GM13976 (cell line): ENCODE measurements at regions of chr2 and their contacts with region 1.

Region 1: DNA sequence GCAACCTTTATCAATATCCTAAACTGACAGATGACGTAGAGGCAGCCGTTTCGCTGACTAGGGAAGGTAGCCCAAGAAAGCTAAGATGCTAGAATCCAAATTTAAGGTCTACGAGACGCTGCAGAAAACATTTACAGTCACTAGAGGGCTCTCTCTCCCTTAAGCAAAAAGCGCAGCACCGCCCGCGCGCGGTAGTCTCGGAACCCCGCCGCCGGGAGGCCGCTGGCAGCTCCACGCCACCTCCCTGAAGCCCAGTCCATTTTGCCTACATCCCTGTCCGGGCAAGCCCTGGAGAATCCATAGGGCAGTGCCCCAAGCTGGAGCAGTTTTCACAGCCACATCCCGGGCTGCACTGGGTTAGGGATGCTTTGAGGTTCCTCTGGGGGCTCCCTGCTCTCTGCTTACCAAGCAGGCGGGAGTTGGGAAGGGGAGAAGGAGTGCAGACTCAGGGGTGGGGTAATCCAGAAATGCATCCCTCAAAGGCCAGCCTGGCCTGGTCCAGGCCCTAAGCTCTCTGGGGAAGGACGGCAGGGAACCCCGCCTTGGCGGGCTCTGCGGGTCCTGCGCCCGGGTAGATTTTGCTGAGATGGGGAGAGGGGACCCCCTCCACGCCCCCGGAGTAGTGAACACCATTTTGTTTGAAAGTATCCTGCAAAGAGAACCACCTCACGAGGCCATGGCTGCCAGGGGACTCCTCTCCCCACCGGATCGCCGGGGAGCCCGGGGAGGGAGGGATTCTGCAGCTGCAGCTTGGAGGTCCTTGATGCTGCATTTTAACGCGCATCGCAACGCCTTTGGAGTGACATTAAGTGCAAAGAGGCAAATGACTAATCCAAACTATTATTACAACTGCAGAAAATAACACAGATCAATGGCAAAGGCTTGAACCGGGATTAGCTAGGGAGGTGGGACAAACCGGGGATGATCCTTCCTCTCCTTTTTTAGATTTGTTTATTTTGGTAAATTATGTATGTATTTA is 1.3 kb upstream of the DPYSL5 start:
- DNase-seq: peak; percentile 85
- CTCF ChIP-seq: peak; percentile 74

Region 2: GRCh38 chr2:26942543-26943295 is 96.1 kb after region 1 on chr2:
- in situ Hi-C with region 1: loop called (anchors 25 kb)
- DNase-seq: peak; percentile 88
- CTCF ChIP-seq: peak; percentile 67